ENCODE measurements at regions of chr5 and their contacts with region 1.

Region 1: DNA sequence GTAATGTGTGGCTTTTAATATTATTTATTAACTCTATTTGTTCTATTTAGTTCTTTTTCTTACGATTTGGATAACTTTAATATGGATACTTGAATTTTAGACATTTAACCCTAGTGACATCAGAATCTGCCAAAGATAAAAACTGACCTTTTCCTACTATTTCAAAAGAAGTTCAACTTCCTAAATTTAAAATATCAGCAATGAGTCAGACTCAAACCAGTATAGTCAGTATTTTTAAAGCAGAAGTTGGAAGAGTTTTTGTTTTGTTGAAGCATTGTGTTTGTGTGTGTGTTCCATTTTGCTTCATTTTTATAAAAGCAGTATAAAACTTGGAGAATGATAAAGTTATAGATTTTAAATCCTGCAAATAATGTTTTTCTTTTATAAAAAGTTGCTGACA is 251.8 kb upstream of the RASA1 start:
- DNase-seq: no peak
- H3K4me3 Mint-ChIP-seq: no peak overlapping the region
- H3K27ac Mint-ChIP-seq: no peak overlapping the region
- H3K4me1 Mint-ChIP-seq: peaks cover 13% of the 10 kb centered on the region
- H3K27me3 Mint-ChIP-seq: no peaks in the 10 kb centered on the region

Region 2: GRCh38 chr5:87069974-87070624 is 54.2 kb after region 1 on chr5:
- CTCF ChIA-PET with region 1: no interaction called
- POLR2A ChIA-PET with region 1: no interaction called
- intact Hi-C with region 1: loop called (anchors 10 kb)
- DNase-seq: no peak
- H3K4me3 Mint-ChIP-seq: no peak overlapping the region
- H3K27ac Mint-ChIP-seq: no peak overlapping the region
- H3K4me1 Mint-ChIP-seq: peaks cover 16% of the 10 kb centered on the region
- H3K27me3 Mint-ChIP-seq: no peaks in the 10 kb centered on the region